Psoas muscle (tissue), 8 donors: ENCODE measurements at regions of chr17 and their contacts with region 1.

Region 1: GRCh38 chr17:45098869-45099616 is 33.3 kb downstream of the PLCD3 start:
- DNase-seq: peak; percentile 90 to 95
- ATAC-seq: peak; percentile 79 to 90 (median 82)
- H3K4me3 ChIP-seq: no peak overlapping the region
- H3K27ac ChIP-seq: peak overlapping the region; percentile 48
- H3K4me1 ChIP-seq: peaks cover 31% of the 10 kb centered on the region
- H3K27me3 ChIP-seq: no peaks in the 10 kb centered on the region
- CTCF ChIP-seq: peak; percentile 91

Region 2: GRCh38 chr17:44919885-44920564 is 179.0 kb before region 1 on chr17:
- intact Hi-C with region 1: loop called in 1 of 2 experiments (anchors 1 kb)
- DNase-seq: peak; percentile 79 to 86
- ATAC-seq: peak; percentile 92 to 98 (median 96)
- H3K4me3 ChIP-seq: no peak overlapping the region
- H3K27ac ChIP-seq: no peak overlapping the region
- H3K4me1 ChIP-seq: no peaks in the 10 kb centered on the region
- H3K27me3 ChIP-seq: peaks cover 0 to 3% (median 0%) of the 10 kb centered on the region in 3 donors
- CTCF ChIP-seq: peak; percentile 83

Region 3: DNA sequence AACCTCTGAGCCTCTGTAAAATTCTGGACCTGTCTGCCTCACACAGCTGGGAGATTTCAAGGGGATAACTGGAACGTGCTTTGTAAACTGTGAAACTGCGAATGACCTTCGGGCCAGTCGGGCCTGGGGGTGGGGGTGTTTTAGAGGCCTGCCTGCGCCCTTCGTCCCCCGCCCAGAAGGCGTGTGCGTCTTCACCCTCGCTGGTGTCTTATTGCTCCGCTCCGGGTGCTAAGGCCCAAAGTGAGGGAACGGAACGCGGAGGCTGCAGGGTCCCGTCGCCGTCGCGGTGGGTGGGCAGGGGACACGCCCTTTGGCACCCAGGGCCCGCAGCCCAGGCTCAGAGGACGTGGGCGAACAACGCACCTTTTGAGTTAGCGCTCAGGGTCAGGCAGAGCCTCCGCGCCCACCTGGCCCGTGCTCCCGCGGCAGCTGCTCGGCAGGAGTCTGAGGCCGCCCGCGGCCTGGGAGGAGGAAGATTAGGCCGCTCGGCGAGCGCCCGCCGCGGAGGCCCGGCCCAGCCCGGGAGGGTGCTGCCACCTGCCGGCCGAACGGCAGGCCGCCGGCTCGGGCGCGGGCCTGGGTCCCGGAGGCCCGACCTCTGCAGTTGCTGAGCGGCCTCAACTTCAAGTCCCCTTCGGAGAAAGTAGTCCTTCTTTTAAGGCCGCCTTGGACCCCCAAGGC is 77.3 kb before region 1 on chr17:
- intact Hi-C with region 1: loop called in 1 of 2 experiments (anchors 1 kb)
- DNase-seq: peak; percentile 73 to 85
- ATAC-seq: peak; percentile 85 to 90 (median 87)
- H3K4me3 ChIP-seq: peak overlapping the region; percentile 67
- H3K27ac ChIP-seq: peak overlapping the region; percentile 68
- H3K4me1 ChIP-seq: peaks cover 15% of the 10 kb centered on the region
- H3K27me3 ChIP-seq: no peaks in the 10 kb centered on the region
- CTCF ChIP-seq: peak; percentile 99

Region 4: GRCh38 chr17:45051060-45051719 is 47.9 kb before region 1 on chr17 and contains the start of gene DCAKD:
- intact Hi-C with region 1: loop called in 1 of 2 experiments (anchors 5 kb)
- DNase-seq: peak; percentile 96 to 97
- ATAC-seq: peak; percentile 98 to 99 (median 99)
- H3K4me3 ChIP-seq: peak within 1 kb of the TSS; percentile 90
- H3K27ac ChIP-seq: peak within 1 kb of the TSS; percentile 97
- H3K4me1 ChIP-seq: peaks cover 23% of the 10 kb centered on the region
- H3K27me3 ChIP-seq: no peaks in the 10 kb centered on the region
- CTCF ChIP-seq: no peak
- total RNA-seq, gene DCAKD: 6.9 to 13.5 (median 11.0) TPM

Region 5: DNA sequence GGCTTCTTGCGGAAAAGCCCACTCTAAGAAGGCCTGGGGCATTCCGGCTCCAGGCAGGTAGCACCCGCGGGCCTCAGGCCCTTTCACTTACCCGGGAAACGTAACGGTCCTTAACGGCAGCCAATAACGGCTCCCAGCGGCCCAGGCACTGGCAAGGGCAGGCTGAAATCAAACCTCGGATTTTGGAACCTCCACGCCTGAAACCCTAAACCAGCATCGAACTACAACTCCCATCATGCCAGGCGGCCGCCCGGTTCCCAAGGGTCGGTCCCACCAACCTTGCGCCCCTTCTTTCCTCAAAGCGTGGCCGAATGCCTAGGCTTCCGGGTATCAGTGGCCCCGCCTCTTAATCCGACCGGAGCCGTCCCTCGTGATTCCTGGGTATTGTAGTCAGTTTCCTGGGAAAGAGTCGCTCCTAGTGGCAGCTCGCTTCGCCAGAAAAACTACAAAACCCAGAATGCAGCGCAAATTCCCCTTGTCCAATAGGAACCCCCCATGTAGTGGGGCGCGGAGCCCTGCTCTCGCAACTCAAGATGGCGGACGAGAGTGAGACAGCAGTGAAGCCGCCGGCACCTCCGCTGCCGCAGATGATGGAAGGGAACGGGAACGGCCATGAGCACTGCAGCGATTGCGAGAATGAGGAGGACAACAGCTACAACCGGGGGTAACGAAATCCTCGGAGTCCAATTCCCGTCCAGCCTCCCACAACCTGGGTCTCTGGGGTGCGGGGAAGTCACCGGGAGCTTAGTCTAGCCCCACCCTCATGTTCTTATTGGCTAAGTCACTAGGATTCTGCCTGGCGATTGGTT is 38.0 kb before region 1 on chr17 and contains the start of gene NMT1:
- intact Hi-C with region 1: loop called in 1 of 2 experiments (anchors 5 kb)
- DNase-seq: peak; percentile 98 to 99
- ATAC-seq: peak; percentile 94 to 97 (median 96)
- H3K4me3 ChIP-seq: peak within 1 kb of the TSS; percentile 84
- H3K27ac ChIP-seq: peak within 1 kb of the TSS; percentile 88
- H3K4me1 ChIP-seq: peaks cover 53% of the 10 kb centered on the region
- H3K27me3 ChIP-seq: no peaks in the 10 kb centered on the region
- CTCF ChIP-seq: no peak
- total RNA-seq, gene NMT1: 73.3 to 164 (median 93.1) TPM